ENCODE measurements at regions of chr18 and their contacts with region 1.

Region 1: GRCh38 chr18:33316146-33316587 is 124.4 kb downstream of the CCDC178 start:
- DNase-seq: peak; percentile 29 to 81
- H3K4me3 ChIP-seq: peak overlapping the region; percentile 5 to 47 (median 8); a peak in 5 of 8 replicates
- H3K27ac ChIP-seq: no peak overlapping the region
- H3K4me1 ChIP-seq: no peaks in the 10 kb centered on the region
- H3K27me3 ChIP-seq: no peaks in the 10 kb centered on the region
- CTCF ChIP-seq: peak; percentile 57 to 79 (median 77)
- EP300 ChIP-seq: no peak
- POLR2A ChIP-seq: no peak
- RAD21 ChIP-seq: peak; percentile 48 to 59; a peak in 3 of 4 replicates

Region 2: DNA sequence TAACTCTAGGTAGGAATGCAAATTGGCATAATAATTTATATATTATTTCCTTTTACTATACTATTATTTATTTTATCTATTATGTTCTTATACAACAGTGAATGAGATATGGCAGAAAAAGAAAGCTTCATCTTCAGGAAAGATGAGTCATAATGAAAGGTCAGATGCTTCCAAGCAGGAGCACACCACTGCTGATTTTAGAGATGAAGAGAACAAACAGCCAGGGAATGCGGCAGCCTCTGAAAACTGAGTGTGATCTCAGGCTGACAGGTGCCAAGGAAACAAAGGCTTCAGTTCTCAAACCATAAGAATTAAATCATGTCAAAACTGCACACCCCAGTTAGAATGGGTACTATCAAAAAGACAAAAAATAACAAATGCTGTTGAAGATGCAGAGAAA is 24.6 kb before region 1 on chr18:
- CTCF ChIA-PET with region 1: no interaction called
- POLR2A ChIA-PET with region 1: no interaction called
- DNase-seq: no peak
- H3K4me3 ChIP-seq: no peak overlapping the region
- H3K27ac ChIP-seq: no peak overlapping the region
- H3K4me1 ChIP-seq: no peaks in the 10 kb centered on the region
- H3K27me3 ChIP-seq: no peaks in the 10 kb centered on the region
- CTCF ChIP-seq: no peak
- EP300 ChIP-seq: no peak
- POLR2A ChIP-seq: no peak
- RAD21 ChIP-seq: no peak

Region 3: GRCh38 chr18:33304277-33304676 is 11.9 kb before region 1 on chr18:
- CTCF ChIA-PET with region 1: interaction called, 26 read pairs
- POLR2A ChIA-PET with region 1: no interaction called
- DNase-seq: no peak
- H3K4me3 ChIP-seq: no peak overlapping the region
- H3K27ac ChIP-seq: no peak overlapping the region
- H3K4me1 ChIP-seq: no peaks in the 10 kb centered on the region
- H3K27me3 ChIP-seq: no peaks in the 10 kb centered on the region
- CTCF ChIP-seq: no peak
- EP300 ChIP-seq: no peak
- POLR2A ChIP-seq: no peak
- RAD21 ChIP-seq: no peak